ENCODE measurements at regions of chr5 and their contacts with region 1.

Region 1: DNA sequence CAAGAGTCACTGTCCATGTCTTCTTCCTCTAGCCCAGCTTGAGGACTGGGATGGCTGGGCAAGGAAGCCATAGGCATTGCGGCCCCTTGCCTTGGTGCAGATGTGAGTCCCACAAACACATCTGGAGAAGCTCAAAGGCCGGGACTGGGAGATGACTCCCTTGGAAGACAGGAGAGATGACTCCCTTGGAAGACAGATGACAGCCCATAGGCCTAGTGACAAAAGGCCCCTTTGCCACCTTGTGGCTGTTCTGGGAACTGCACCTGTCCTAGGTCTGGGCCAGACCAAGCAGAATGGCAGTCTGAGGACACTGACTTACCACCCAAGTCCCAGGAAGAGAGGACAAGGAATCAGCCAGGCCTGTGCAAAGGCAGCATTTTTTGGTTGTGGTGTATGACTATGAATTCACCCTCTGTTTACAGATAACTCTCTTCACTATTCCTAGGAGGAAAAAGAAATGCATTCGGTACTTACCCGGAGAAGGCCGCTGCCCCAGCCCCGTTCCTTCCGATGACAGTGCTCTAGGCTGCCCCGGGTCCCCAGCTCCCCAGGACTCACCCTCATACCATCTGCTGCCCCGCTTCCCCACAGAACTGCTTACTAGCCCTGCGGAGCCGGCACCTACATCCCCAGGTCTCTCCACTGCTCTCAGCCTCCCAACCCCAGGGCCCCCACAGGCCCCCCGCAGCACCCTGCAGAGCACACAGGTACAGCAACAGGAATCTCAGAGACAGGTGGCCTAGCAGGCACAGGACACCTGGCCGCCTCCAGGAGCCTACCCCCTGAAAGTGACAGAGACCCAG is 30.8 kb downstream of the SKP1 start:
- DNase-seq: no peak
- H3K4me3 ChIP-seq: no peak overlapping the region
- CTCF ChIP-seq: peak; percentile 89

Region 2: GRCh38 chr5:133785182-133785581 is 360.8 kb before region 1 on chr5:
- CTCF ChIA-PET with region 1: no interaction called
- POLR2A ChIA-PET with region 1: no interaction called
- DNase-seq: no peak
- H3K4me3 ChIP-seq: no peak overlapping the region
- CTCF ChIP-seq: no peak

Region 3: DNA sequence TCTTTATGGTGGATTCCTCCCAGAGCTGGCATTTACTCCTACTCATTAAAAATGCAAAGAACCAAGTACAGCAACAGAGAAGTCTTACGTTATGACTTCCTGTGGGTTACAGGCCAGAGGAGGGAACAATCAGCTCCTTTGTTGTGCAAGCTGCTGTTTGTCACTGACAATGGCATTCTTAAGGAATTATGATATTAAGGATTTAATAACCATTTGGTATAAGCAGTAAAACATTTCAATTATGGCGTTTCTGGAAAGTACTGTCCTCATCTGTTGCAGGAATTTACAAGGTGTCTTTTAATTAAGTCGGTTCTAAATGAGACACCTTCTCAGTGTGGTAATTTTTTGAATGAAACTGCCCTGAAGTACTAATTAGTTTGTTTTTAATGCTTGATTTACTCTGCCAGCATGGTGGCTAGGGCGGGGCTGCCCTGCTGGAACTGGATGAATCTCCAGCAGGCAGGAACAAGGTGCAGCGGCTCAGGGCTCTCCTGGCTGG is 92.1 kb before region 1 on chr5:
- CTCF ChIA-PET with region 1: interaction called, 1,500 read pairs
- POLR2A ChIA-PET with region 1: no interaction called
- DNase-seq: no peak
- H3K4me3 ChIP-seq: no peak overlapping the region
- CTCF ChIP-seq: no peak

Measured in AG04449 (cell line).